Activated CD4-positive, alpha-beta memory T cell treated with anti-CD3 and anti-CD28 coated beads, Interleukin-2, amount 10 ng/mL, durations not matched to agents 7 days and 5 days (primary cell): ENCODE measurements at regions of chr1 and their contacts with region 1.

Region 1: GRCh38 chr1:9717193-9718005 is 65.9 kb downstream of the PIK3CD start:
- DNase-seq: peak; percentile 96
- H3K4me3 Mint-ChIP-seq: peak overlapping the region; percentile 90
- H3K27ac Mint-ChIP-seq: peak overlapping the region; percentile 90
- H3K4me1 Mint-ChIP-seq: peaks cover 69% of the 10 kb centered on the region
- H3K27me3 Mint-ChIP-seq: no peaks in the 10 kb centered on the region

Region 2: DNA sequence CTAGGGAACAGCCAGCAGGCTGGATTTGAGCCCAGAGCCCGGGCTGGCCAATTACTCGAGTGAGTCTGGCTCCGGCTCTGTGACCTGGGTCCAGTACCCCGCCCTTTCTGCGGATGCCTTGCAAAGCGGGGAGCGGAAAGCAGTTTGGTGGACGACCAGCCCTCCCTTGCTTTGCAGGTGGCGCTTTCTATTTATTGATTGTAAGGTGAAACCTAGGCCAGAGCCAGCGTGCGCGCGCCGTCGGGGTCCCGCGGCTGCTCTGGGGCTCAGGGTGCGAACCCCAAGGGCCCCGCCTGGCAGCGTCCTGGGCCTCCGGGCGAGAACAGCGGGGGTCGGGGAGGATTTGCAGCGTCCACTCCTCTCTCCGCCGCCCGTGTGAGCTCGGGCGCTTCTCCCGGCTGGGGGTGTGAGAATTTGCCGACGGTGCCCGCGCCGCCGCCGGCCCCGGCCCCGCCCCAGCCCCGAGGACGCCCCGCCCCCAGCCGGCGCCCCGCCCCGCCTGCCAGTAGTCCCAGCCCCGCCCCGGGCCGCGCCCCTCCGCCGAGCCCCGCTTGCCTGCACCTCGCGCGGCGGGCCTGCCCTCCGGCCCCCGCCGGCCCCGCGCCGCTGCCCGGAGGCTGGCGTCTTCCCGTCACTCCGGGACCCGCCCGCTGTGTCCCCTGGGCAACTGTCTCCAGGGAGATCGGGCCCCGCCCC is 28.2 kb before region 1 on chr1:
- CTCF ChIA-PET with region 1: interaction called, 4 read pairs
- POLR2A ChIA-PET with region 1: interaction called, 65 read pairs
- DNase-seq: peak; percentile 84
- H3K4me3 Mint-ChIP-seq: peak overlapping the region; percentile 62
- H3K27ac Mint-ChIP-seq: no peak overlapping the region
- H3K4me1 Mint-ChIP-seq: peaks cover 62% of the 10 kb centered on the region
- H3K27me3 Mint-ChIP-seq: no peaks in the 10 kb centered on the region

Region 3: DNA sequence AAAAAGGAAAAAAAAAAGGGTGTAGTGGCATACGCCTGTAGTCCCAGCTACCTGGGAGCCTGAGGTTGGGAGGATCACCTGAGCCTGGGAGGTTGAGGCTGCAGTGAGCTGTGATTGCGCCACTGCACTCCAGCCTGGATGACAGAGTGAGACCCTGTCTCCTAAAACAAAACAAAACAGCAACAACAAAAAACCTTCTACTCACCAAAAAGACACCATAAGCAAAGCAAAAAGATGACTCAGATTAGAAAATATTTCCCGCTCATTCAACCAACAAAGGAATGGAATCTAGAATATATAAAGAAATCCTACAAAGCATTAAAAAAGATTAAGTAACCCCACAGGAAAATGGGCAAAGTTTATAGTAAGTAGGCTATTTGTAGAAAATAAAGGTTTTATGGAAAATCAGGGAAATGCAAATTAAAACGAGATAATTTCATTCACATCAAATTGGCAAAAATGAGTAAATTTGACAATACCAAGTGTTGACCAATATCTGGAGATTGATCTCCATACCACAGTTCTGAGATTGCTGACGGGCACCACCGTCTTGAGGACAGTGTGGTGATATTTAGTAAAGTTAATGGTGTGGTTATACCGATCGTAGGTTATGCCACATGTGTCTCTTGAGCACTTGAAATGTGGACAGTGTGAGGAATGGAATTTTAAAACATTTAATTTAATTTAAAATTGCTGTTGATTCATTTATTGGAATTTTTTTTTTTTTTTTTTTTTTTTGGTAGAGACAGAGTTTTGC is 11.9 kb before region 1 on chr1:
- CTCF ChIA-PET with region 1: interaction called, 6 read pairs
- POLR2A ChIA-PET with region 1: interaction called, 15 read pairs
- DNase-seq: no peak
- H3K4me3 Mint-ChIP-seq: peak overlapping the region; percentile 14
- H3K27ac Mint-ChIP-seq: peak overlapping the region; percentile 78
- H3K4me1 Mint-ChIP-seq: peaks cover 66% of the 10 kb centered on the region
- H3K27me3 Mint-ChIP-seq: no peaks in the 10 kb centered on the region